ENCODE measurements at regions of chr12 and their contacts with region 1.

Region 1: DNA sequence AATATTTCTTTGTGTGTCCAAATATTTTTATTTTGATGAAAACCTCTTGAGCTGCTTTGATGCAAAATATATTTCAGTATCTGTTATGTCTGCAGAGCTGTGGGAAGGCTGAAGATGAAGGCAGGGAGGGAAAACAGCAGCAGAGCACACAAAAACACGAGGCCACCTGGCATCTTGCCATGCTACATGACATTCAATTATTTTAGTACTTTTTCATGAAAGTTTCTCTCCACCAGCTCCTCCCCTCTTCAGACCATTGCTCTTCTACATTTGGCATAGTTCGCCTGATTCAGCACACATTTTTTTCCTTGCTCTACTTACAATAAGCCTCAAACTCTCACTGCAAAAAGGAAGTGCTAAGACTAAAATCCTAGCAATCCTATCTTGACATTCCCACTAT is 4.6 kb upstream of the ALX1 start:
- DNase-seq: no peak
- H3K27ac ChIP-seq: no peak overlapping the region
- CTCF ChIP-seq: no peak

Region 2: DNA sequence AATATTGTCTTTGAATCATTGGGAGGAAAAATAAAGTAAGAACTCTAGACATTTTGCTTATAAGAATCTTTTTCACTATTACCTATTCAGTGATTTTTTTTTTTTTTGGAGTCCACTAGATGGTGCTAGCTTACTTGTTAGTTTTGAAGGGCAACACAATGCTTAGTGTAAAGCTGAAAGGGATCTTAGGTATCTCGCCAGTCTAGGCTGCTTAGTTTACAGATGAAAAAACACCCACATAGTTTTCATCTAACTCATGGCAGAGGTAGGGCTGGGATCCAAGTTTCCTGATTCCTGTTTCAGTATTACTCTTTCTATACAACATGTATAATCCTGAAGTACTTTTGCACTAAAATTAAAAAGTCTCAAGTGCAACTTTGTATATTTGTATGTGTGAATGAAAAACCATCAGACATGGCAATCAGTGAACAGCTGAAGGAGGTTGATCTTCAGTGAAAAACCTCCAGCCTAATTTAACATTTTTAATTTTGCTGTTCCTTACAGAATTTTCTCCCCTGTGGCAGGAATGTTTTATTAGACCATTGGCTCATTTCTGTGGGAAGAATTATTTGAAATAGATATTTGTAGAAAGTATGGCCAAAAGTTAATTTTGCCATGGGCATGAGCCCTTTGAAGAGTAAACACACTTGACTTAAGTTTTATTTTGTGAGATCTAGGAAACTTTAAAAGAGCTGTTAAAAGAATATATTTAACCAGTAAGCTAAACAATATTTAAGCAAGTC is 198.5 kb before region 1 on chr12:
- CTCF ChIA-PET with region 1: no interaction called
- POLR2A ChIA-PET with region 1: interaction called, 11 read pairs
- DNase-seq: peak; percentile 85
- H3K27ac ChIP-seq: no peak overlapping the region
- CTCF ChIP-seq: peak; percentile 73